Head of caudate nucleus (tissue), 42 donors: ENCODE measurements at regions of chr20 and their contacts with region 1.

Region 1: DNA sequence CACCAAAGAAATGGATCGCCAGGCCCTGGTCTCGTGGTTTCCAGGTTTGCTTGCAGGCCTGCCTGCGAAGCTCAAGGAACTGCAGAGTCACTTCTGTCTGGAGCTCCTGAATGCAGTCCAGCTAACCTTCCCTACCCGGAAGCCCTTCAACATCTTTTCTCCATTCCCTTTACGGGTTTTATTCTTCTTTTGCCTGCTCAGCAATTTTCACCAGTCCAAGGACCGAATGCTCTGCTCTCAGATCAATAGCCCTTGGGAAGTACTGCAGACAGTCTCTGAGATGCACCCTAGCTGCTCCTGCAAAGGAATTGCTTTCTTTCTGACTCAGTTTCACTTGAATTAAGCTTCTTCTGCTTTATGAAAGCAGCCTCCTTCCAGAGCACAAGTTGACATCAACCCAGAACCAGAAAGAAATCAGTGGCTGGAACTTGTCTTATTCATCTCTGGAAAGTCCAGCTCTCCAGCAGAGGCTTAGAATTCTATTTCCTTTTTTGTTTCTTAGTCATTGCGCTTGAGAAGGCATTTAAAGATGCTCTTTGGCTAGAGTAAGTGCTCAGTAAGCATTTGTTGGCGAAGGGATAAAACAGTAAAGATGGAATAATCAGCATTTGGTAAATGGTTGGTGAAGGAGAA is 18.7 kb upstream of the YWHAB start:
- DNase-seq: no peak

Region 2: DNA sequence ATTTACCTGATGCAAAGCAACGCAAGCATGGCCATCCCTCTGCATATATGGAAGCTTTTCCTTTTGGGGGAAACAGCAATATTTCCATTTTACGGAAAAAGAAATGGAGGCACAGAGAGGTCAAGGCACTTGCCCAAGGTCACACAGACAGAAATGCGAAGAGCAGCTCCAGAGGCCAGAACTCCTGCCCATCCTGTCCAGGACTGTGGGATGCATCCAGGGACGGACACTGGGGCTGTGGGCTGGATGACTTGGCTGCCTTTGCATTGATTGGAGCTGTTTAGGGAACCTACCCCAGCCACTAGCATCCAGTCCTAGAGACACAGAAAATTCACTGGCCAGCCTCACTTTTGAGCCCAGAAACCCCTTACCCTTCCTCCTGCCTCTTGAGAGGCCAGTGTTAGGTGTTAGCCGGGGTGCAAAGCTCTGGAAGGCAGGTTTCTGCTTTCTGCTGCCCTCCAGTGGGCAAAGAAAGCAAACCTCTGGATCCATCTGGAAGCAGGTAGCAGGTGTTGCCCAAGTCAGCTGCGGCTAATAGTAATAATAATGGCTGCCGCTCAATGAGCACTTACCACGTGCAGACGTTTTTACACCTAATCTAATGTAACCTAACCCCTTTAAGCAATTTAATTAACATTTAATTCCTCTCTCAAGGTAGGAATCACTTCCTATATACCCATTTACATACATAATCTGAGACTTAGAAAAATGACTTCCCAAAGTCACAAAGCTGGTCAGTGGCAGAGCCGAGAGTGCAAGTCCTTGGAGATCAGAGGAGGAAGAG is 183.4 kb before region 1 on chr20:
- intact Hi-C with region 1: loop called (anchors 5 kb)
- DNase-seq: peak in 37 of 42 donors; percentile 19 to 80 (median 64)

Region 3: DNA sequence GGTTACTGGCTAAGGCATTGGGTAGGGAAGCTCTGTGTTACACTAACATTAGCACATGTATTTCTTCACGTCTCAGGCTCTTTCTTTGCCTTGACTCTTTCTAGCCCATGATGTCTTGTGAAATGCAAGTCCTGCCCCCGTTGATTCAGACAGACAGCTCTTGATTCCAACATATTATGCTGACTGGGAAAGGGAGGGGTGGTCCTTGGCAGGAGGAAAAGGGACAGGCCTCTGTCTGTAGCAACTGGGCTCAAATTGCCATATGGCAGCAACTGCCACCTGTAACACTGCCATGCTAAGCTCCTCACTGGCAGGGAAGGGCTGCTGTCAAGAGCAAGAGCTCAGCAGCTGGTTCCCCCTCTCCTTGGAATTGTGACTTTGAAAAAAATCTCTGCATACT is 126.9 kb before region 1 on chr20:
- intact Hi-C with region 1: loop called (anchors 5 kb)
- DNase-seq: no peak

Region 4: GRCh38 chr20:44819936-44820335 is 46.9 kb before region 1 on chr20:
- intact Hi-C with region 1: no loop called
- DNase-seq: no peak

Region 5: DNA sequence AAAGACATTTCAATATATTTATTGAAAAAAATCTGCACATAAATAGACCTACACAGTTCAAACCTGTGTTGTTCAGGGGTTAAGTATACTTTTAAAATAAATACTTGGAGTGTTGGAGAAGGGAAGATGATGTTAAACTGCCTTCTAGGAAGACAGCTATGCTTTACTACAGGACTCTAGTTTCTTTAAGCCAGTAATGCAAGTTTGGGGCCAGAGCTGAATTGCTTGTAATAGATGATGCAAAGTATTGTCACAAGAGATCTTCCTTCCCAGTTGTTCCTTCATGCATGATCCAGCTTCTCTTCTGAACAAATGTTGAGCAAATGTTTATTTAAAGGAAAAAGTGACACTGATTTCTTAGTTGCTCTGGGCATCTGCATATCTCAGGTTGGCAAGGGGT is 36.3 kb before region 1 on chr20:
- intact Hi-C with region 1: no loop called
- DNase-seq: no peak